GM13976 (cell line): ENCODE measurements at regions of chr15 and their contacts with region 1.

Region 1: DNA sequence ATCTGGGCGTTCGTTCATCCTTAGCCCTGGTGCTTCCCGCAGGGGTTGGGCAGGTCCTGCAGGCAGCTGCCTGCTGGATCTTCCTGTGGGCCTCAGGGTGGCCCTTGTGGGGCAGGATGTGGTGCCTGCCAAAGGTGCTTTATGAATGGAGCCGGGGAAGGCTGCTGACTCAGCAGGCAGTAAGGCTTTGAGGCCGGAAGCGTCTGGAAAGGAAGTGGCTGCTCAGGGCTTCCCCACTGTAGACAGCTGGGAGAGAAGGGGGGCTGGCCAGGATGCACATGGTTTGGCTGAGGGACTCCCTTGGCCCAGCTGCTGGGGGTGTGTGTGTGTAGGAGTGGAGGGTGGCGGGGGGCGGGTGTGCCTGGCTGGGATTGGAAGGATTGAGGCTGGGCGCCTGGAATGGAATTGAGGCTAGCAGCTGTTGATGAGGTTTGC is 12.9 kb downstream of the CD276 start:
- DNase-seq: peak; percentile 84
- CTCF ChIP-seq: no peak

Region 2: DNA sequence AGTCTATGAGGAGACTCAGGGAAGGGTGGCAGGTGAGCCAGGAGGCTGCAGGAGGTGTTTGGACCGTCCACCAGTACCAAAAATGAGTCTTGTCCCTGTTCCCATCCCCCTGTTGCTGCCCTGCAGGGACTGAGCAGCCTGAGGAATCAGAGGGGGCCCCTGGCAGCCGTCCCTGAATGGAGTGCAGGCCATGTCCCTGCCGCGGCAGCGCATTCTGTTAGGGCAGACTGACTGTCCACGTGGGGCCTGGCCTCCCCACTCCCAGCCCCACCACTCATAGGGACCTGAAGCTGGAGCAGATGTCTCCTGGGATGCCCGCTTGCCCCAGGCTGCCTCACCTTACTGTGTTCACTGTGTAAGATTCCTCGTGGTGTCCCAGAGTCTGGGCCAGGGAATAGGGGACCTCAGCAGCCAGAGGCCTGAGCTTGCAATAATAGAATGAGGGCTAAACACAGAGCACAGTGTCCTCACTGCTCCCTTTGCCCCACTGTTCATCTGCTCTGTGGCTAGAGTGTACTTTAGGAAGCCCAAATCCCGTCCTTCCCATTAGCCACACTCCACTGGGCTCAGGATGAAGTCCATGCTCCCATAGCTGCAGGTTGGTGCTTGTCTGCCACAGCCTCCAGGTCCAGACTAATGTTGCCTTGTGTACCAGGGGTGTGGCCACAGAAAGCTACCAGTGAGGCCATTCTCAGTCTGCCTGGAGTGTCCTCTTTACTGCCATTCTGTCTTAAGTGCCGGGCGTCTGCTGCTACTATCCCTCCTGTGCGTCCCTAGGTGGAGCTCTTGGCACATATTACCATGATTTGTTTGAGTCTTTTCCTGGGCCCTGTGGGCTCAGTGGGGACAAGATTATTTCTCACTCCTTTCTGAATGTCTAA is 391.5 kb before region 1 on chr15:
- in situ Hi-C with region 1: loop called (anchors 25 kb)
- DNase-seq: peak; percentile 66
- CTCF ChIP-seq: peak; percentile 14

Region 3: GRCh38 chr15:73550190-73550589 is 146.9 kb before region 1 on chr15:
- in situ Hi-C with region 1: loop called (anchors 10 kb)
- DNase-seq: no peak
- CTCF ChIP-seq: no peak

Region 4: DNA sequence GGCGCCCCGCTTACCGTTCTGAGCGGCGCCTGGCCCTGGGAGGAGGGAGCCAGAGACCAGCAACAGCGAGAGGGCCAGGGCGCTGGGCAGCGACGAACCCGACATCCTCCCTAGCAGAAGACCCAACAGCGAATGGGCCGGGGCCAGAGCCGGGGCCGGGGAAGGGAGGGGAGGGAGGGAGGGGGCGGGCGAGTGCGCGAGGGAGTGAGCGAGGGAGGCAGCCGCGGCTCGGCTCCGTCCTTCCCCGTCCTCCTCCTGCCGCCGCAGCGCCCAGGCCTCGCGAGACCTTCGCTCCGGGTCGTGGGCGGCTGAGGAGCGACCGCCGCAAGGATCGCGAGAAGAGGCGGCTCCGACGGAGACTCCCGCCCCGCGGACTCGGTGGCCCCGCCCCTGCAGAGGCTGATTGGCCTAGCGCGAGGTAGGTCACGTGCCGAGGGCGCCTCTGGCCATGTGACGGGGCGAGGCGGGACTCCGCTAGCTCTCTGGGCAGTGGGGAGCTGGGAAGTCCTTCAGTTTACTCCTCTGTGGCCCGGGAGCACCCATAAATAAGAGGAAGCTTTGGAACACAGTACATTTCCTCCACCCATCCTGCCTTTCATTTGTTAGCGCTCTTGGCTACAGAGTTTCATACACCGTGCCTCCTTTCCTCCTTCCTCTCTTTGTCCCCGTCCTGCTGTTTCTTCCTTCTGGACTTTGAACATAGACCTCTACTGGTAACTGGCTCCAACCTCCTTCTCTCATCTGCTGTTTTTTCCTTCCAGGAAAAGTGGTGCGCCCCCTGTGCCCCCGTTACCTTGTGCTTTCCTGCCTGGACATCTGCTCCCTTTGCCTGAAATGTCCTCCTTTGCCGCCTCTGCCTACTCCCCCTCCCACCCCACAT is 63.7 kb before region 1 on chr15 and contains the start of gene NPTN:
- in situ Hi-C with region 1: loop called (anchors 10 kb)
- DNase-seq: peak; percentile 97
- CTCF ChIP-seq: no peak

Region 5: DNA sequence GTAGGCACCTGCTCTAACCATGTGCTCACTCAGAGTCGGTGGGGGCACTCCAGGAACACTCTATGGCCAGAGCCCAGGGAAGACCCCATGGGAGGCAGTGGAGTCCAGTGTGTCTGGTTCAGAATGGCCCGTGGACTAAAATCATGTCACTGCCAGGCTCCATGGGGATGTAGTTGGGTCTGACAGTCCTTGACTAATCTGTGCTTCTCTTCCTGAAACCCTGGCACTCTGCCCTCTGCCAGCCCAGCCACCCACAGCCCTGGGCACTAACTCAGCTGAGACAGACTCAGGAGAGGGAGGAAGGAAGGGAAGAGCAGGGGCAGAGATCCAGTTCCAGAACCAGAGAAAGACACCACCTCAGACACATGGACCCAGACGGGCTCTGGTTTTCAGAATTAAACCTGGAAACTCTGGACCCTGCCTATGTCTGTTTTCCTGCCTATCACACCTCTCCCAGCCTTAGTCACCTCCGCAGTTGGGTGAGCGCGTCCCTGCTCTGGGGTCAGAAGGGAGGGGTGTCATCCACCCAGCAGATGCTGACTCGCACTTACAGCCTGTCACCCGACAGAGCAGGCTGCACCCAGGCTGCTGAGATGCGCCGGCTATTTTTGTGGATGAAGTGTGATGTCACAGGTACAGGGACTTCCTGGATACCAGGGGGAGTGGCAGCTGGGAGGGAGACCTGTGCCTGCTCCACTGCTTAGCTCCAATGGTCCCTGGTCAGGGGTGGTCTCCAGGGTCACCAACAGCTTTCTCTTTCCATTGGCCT is 112.9 kb after region 1 on chr15:
- in situ Hi-C with region 1: no loop called
- DNase-seq: no peak
- CTCF ChIP-seq: no peak

Region 6: GRCh38 chr15:75090388-75090734 is 1393.3 kb after region 1 on chr15:
- in situ Hi-C with region 1: no loop called
- DNase-seq: no peak
- CTCF ChIP-seq: no peak